Activated CD4-positive, alpha-beta memory T cell treated with anti-CD3 and anti-CD28 coated beads, Interleukin-2, amount 10 ng/mL, durations not matched to agents 7 days and 5 days (primary cell): ENCODE measurements at regions of chr1 and their contacts with region 1.

Region 1: GRCh38 chr1:35769188-35769758 is 505 bp downstream of the CLSPN start:
- DNase-seq: peak; percentile 89
- H3K4me3 Mint-ChIP-seq: peak overlapping the region; percentile 80
- H3K27ac Mint-ChIP-seq: peak overlapping the region; percentile 74
- H3K4me1 Mint-ChIP-seq: peaks cover 40% of the 10 kb centered on the region
- H3K27me3 Mint-ChIP-seq: no peaks in the 10 kb centered on the region

Region 2: DNA sequence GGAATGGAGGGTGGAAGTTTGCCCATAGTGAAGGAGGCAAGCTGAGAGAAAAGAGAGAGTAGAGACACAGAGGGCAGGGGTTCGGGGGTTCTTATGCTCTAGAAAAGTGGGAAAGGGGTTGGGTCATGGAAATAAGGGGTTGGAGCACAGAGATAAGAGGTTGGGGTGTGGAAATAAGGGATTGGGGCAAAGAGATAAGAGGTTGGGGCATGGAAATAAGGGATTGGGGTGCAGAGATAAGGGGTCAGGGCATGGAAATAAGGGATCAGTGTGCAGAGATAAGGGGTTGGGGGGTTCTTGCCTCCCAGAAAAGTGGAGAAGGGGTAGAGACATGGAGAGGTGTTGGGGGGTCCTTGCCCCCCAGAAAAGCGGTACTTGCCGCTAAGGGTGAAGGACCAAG is 632.5 kb before region 1 on chr1:
- CTCF ChIA-PET with region 1: no interaction called
- POLR2A ChIA-PET with region 1: no interaction called
- DNase-seq: no peak
- H3K4me3 Mint-ChIP-seq: no peak overlapping the region
- H3K27ac Mint-ChIP-seq: no peak overlapping the region
- H3K4me1 Mint-ChIP-seq: no peaks in the 10 kb centered on the region
- H3K27me3 Mint-ChIP-seq: no peaks in the 10 kb centered on the region

Region 3: GRCh38 chr1:35192853-35193664 is 576.2 kb before region 1 on chr1 and contains the start of gene SFPQ:
- CTCF ChIA-PET with region 1: no interaction called
- POLR2A ChIA-PET with region 1: interaction called, 11 read pairs
- DNase-seq: peak; percentile 97
- H3K4me3 Mint-ChIP-seq: peak within 1 kb of the TSS; percentile 94
- H3K27ac Mint-ChIP-seq: peak within 1 kb of the TSS; percentile 99
- H3K4me1 Mint-ChIP-seq: peaks cover 44% of the 10 kb centered on the region
- H3K27me3 Mint-ChIP-seq: peaks cover 2% of the 10 kb centered on the region
- total RNA-seq, gene SFPQ: 319 to 328 TPM

Region 4: DNA sequence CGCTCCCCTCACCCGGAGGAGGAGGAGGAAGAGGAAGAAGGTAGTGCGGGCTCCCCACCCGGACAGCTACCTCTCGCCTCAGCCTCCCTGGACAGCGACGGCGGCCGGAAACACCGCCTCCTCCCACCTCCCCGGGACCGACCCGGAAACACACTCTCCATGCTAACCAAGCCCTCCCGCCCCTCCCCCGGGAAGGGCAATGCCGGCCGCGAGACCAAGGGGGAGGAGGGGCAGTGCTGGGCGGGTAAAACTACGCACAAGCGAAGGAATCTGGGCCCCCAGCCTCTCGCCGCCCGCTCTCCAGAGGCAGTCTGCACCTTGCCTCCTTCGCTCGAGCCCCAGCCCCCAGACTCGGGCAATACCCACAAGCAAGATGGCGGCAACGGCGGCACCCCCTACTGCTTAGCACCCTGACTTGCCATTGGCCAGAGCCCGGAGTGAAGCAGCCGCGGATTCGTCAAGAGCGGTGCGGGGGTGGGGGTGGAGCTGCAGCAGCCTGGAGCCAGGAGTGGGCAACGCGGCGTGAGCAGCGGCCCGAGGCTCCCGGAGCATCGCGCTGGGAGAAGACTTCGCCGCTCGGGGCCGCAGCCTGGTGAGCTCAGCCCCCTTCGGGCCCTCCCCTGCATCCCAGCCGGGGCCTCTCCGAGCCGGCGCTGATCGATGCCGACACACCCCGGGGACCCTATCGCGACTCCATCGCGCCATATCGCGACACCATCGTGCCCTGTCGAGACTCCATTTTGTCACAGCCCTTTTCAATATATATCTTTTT is 211.8 kb before region 1 on chr1 and contains the starts of genes KIAA0319L and NCDN:
- CTCF ChIA-PET with region 1: interaction called, 4 read pairs
- POLR2A ChIA-PET with region 1: interaction called, 27 read pairs
- DNase-seq: peak; percentile 97
- H3K4me3 Mint-ChIP-seq: peak within 1 kb of the TSS; percentile 95
- H3K27ac Mint-ChIP-seq: peak within 1 kb of the TSS; percentile 94
- H3K4me1 Mint-ChIP-seq: peaks cover 47% of the 10 kb centered on the region
- H3K27me3 Mint-ChIP-seq: no peaks in the 10 kb centered on the region
- total RNA-seq, gene KIAA0319L: 48.4 to 53.2 TPM
- total RNA-seq, gene NCDN: 25.6 to 27.8 TPM

Region 5: DNA sequence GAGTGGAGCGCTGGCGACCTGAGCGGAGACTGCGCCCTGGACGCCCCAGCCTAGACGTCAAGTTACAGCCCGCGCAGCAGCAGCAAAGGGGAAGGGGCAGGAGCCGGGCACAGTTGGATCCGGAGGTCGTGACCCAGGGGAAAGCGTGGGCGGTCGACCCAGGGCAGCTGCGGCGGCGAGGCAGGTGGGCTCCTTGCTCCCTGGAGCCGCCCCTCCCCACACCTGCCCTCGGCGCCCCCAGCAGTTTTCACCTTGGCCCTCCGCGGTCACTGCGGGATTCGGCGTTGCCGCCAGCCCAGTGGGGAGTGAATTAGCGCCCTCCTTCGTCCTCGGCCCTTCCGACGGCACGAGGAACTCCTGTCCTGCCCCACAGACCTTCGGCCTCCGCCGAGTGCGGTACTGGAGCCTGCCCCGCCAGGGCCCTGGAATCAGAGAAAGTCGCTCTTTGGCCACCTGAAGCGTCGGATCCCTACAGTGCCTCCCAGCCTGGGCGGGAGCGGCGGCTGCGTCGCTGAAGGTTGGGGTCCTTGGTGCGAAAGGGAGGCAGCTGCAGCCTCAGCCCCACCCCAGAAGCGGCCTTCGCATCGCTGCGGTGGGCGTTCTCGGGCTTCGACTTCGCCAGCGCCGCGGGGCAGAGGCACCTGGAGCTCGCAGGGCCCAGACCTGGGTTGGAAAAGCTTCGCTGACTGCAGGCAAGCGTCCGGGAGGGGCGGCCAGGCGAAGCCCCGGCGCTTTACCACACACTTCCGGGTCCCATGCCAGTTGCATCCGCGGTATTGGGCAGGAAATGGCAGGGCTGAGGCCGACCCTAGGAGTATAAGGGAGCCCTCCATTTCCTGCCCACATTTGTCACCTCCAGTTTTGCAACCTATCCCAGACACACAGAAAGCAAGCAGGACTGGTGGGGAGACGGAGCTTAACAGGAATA is 191.9 kb before region 1 on chr1:
- CTCF ChIA-PET with region 1: interaction called, 3 read pairs
- POLR2A ChIA-PET with region 1: interaction called, 25 read pairs
- DNase-seq: peak; percentile 84
- H3K4me3 Mint-ChIP-seq: peak overlapping the region; percentile 80
- H3K27ac Mint-ChIP-seq: peak overlapping the region; percentile 79
- H3K4me1 Mint-ChIP-seq: peaks cover 32% of the 10 kb centered on the region
- H3K27me3 Mint-ChIP-seq: peaks cover 21% of the 10 kb centered on the region

Region 6: GRCh38 chr1:35747938-35748702 is 21.2 kb before region 1 on chr1:
- CTCF ChIA-PET with region 1: interaction called, 3 read pairs
- POLR2A ChIA-PET with region 1: interaction called, 11 read pairs
- DNase-seq: no peak
- H3K4me3 Mint-ChIP-seq: no peak overlapping the region
- H3K27ac Mint-ChIP-seq: no peak overlapping the region
- H3K4me1 Mint-ChIP-seq: no peaks in the 10 kb centered on the region
- H3K27me3 Mint-ChIP-seq: no peaks in the 10 kb centered on the region

Region 7: GRCh38 chr1:35783055-35783583 is 13.8 kb after region 1 on chr1:
- CTCF ChIA-PET with region 1: interaction called, 13 read pairs
- POLR2A ChIA-PET with region 1: interaction called, 73 read pairs
- DNase-seq: no peak
- H3K4me3 Mint-ChIP-seq: no peak overlapping the region
- H3K27ac Mint-ChIP-seq: no peak overlapping the region
- H3K4me1 Mint-ChIP-seq: peaks cover 15% of the 10 kb centered on the region
- H3K27me3 Mint-ChIP-seq: no peaks in the 10 kb centered on the region

Region 8: GRCh38 chr1:35930593-35931445 is 161.5 kb after region 1 on chr1 and contains the start of gene AGO3:
- CTCF ChIA-PET with region 1: interaction called, 3 read pairs
- POLR2A ChIA-PET with region 1: interaction called, 13 read pairs
- DNase-seq: peak; percentile 88
- H3K4me3 Mint-ChIP-seq: peak within 1 kb of the TSS; percentile 94
- H3K27ac Mint-ChIP-seq: peak within 1 kb of the TSS; percentile 93
- H3K4me1 Mint-ChIP-seq: peaks cover 30% of the 10 kb centered on the region
- H3K27me3 Mint-ChIP-seq: no peaks in the 10 kb centered on the region
- total RNA-seq, gene AGO3: 22.2 to 22.8 TPM